Sigmoid colon (tissue), 7 donors: ENCODE measurements at regions of chr19 and their contacts with region 1.

Region 1: GRCh38 chr19:56393119-56394012 is at the start of gene ZNF582:
- DNase-seq: peak; percentile 98
- H3K4me3 ChIP-seq: peak within 1 kb of the TSS; percentile 58 to 83 (median 68)
- H3K27ac ChIP-seq: peak within 1 kb of the TSS; percentile 83 to 93 (median 92)
- H3K4me1 ChIP-seq: peaks cover 0 to 14% (median 5%) of the 10 kb centered on the region in 4 donors
- H3K27me3 ChIP-seq: no peaks in the 10 kb centered on the region
- CTCF ChIP-seq: peak; percentile 36 to 70 (median 41)
- EP300 ChIP-seq: no peak
- POLR2A ChIP-seq: no peak
- total RNA-seq, gene ZNF582: 3.9 to 5.5 (median 4.5) TPM

Region 2: DNA sequence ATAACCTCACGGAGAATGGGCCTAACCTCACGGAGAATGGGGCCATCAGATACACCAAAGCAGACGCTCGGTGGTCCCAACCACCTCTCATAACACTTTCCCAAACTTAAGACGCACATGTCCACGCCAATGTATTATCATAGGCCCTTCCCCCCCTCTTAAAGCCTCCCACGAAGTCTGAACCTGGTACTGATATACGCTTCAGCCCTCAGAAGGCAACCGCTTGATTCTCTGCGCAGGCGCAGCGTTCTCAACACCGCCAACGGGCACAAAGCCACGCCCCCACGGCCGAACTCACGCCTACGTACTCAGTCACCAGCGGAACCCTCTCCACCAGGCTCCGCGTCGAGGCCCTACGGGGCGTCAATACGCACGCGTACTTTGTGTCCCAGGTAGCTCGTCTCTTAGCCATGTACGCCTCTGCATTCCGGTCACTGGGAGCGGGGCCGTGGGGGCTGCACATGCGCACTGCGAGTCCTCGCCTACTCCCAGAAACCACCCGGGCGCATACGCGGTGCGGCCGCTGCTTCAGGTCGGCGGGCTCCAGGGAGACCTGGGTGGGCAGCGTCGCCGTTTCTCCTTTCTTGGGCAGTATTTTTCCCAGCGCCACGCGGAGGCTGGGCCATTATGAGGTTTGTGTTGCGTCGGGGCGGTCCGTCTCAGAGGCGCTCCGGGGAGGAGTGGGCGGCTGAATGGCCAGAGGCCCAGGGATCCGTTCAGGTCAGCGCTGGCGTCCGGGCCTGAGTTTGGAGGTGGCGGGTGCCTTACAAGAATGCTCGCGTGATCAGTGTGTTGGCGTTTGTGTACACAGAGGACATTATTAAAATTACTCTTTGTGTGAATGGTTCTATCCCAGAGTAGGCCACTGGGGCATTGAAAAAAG is 25.3 kb before region 1 on chr19:
- intact Hi-C with region 1: loop called (anchors 1 kb)
- DNase-seq: peak; percentile 97
- H3K4me3 ChIP-seq: peak overlapping the region; percentile 57 to 73 (median 70)
- H3K27ac ChIP-seq: peak overlapping the region; percentile 84 to 92 (median 88)
- H3K4me1 ChIP-seq: peaks cover 0 to 16% (median 11%) of the 10 kb centered on the region in 4 donors
- H3K27me3 ChIP-seq: no peaks in the 10 kb centered on the region
- CTCF ChIP-seq: peak in 1 of 4 experiments; percentile 15
- EP300 ChIP-seq: no peak
- POLR2A ChIP-seq: no peak

Region 3: DNA sequence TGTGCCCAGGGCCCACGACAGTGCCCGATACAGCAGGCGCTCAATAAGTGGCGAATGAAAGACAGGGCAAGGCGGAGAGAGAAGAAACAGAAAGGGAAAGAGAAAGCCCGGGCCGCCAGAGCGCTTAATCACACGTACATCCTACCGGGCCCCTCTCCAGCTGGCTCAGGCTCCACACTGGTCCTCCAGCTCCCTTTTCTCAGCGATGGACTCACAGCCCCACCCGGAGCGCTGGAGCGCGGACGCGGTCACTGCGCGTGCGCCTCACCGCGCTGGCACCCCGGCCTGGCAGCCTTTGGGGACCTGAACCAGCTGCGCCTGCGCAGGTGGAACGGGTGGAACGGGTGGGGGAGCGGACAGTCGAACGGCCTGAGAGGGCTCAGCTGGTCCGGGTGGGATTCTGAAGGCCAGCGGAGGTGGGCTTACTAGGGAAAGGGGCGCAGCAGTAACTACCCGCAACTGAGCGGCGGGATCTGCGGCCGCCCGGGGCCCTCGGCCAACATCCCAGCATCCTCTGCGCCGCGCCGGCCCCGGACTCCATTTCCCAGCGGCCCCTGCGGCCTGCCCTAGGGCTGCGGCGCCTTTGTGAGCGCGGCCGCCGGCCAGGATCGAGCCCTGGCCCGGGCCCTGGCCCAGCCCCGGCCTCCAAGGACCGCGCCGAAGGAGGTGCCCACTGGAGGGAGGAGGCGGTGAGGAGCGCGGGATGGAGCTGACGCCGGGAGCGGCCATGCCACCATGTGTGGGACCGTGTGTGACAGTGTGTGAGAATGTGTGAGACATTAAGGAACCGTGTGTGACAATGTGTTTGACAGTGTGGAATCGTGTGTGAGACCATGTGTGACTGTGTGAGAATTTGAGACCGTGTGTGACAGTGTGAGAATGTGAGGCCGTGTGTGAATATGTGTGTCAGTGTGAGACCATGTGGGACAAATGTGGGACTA is 10.7 kb after region 1 on chr19 and contains the start of gene ZNF583:
- intact Hi-C with region 1: loop called (anchors 1 kb)
- DNase-seq: peak; percentile 99
- H3K4me3 ChIP-seq: peak within 1 kb of the TSS; percentile 61 to 79 (median 73)
- H3K27ac ChIP-seq: peak within 1 kb of the TSS; percentile 89 to 96 (median 94)
- H3K4me1 ChIP-seq: peaks cover 0 to 17% (median 15%) of the 10 kb centered on the region in 4 donors
- H3K27me3 ChIP-seq: no peaks in the 10 kb centered on the region
- CTCF ChIP-seq: no peak
- EP300 ChIP-seq: no peak
- POLR2A ChIP-seq: no peak
- total RNA-seq, gene ZNF583: 8.7 to 12.7 (median 10.4) TPM

Region 4: GRCh38 chr19:56507446-56508289 is 114.3 kb after region 1 on chr19 and contains the start of gene ZNF471:
- intact Hi-C with region 1: loop called (anchors 5 kb)
- DNase-seq: peak; percentile 99
- H3K4me3 ChIP-seq: peak within 1 kb of the TSS; percentile 68 to 82 (median 80)
- H3K27ac ChIP-seq: peak within 1 kb of the TSS; percentile 94 to 99 (median 96)
- H3K4me1 ChIP-seq: peaks cover 0 to 12% (median 6%) of the 10 kb centered on the region in 4 donors
- H3K27me3 ChIP-seq: no peaks in the 10 kb centered on the region
- CTCF ChIP-seq: no peak
- EP300 ChIP-seq: no peak
- POLR2A ChIP-seq: no peak
- total RNA-seq, gene ZNF471: 8.1 to 11.4 (median 9.3) TPM

Region 5: DNA sequence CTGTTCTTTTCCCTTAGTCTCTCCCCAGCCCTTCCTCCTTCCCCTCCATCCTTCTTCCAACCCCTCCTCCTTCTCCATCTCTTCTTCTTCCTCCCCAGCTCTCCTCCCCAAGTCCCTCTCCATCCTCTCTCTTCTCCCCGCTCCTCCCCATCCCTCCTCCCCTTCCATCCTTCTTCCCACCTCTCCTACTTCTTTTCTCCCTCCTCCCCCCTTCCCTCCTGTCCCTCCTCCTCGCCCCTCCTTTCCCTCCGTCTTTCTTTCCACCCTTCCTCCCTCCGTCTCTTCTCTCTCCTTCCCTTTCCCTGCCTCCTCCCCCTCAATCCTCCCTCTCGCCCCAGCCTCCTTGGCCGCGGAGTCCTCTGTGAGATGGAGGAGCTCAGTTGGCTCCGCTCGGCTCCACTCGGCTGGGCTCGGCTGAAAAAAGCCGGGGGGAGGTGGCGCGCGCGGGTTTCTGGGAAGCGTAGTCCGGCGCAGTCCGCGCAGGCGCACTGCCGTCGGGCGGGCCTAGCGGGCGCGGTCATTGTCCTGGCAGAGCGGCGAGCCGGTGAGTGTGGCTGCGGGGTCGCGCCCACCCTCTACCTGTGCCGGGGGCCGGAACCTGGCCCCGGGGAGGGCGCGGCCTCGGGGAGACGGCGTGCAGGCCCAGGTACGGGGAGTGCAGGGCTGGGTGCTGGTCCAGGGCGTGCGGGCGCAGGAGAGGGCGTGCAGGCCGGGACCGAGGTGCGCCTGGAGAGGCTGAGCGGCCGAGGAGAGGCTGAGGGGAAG is 201.6 kb after region 1 on chr19 and contains the start of gene ZNF71:
- intact Hi-C with region 1: loop called (anchors 10 kb)
- DNase-seq: peak; percentile 93
- H3K4me3 ChIP-seq: peak within 1 kb of the TSS; percentile 80 to 100 (median 90)
- H3K27ac ChIP-seq: peak within 1 kb of the TSS; percentile 71 to 80 (median 79)
- H3K4me1 ChIP-seq: peaks cover 0 to 19% (median 8%) of the 10 kb centered on the region in 4 donors
- H3K27me3 ChIP-seq: no peaks in the 10 kb centered on the region
- CTCF ChIP-seq: no peak
- EP300 ChIP-seq: no peak
- POLR2A ChIP-seq: no peak
- total RNA-seq, gene ZNF71: 10.4 to 18.0 (median 11.1) TPM